ENCODE measurements at regions of chr19 and their contacts with region 1.

Region 1: GRCh38 chr19:41859618-41860418 is at the start of gene RPS19:
- DNase-seq: peak; percentile 97
- ATAC-seq: peak; percentile 89
- H3K4me3 ChIP-seq: peak within 1 kb of the TSS; percentile 94
- H3K27ac ChIP-seq: peak within 1 kb of the TSS; percentile 98
- H3K4me1 ChIP-seq: peaks cover 24% of the 10 kb centered on the region
- H3K27me3 ChIP-seq: no peaks in the 10 kb centered on the region
- CTCF ChIP-seq: peak in 2 of 3 experiments; percentile 51 to 62; a peak in 4 of 6 replicates
- EP300 ChIP-seq: no peak
- POLR2A ChIP-seq: peak; percentile 99
- RAD21 ChIP-seq: no peak
- polyA plus RNA-seq, gene RPS19: 5,523 to 5,578 TPM

Region 2: GRCh38 chr19:41734617-41735016 is 125.2 kb before region 1 on chr19:
- CTCF ChIA-PET with region 1: no interaction called
- POLR2A ChIA-PET with region 1: no interaction called
- RAD21 ChIA-PET with region 1: no interaction called
- SMC1A ChIA-PET with region 1: no interaction called
- in situ Hi-C with region 1: no loop called
- intact Hi-C with region 1: no loop called
- DNase-seq: no peak
- ATAC-seq: no peak
- H3K4me3 ChIP-seq: no peak overlapping the region
- H3K27ac ChIP-seq: no peak overlapping the region
- H3K4me1 ChIP-seq: no peaks in the 10 kb centered on the region
- H3K27me3 ChIP-seq: no peaks in the 10 kb centered on the region; a peak in 2 of 4 replicates
- CTCF ChIP-seq: no peak
- EP300 ChIP-seq: no peak
- POLR2A ChIP-seq: no peak
- RAD21 ChIP-seq: no peak

Region 3: GRCh38 chr19:41872775-41873647 is 13.2 kb after region 1 on chr19:
- CTCF ChIA-PET with region 1: interaction called, 85 read pairs
- POLR2A ChIA-PET with region 1: interaction called, 46 read pairs
- RAD21 ChIA-PET with region 1: interaction called, 57 read pairs
- SMC1A ChIA-PET with region 1: interaction called, 47 read pairs
- in situ Hi-C with region 1: no loop called
- intact Hi-C with region 1: no loop called
- DNase-seq: no peak
- ATAC-seq: peak; percentile 11; the same call in 2 of the 3 replicates
- H3K4me3 ChIP-seq: no peak overlapping the region
- H3K27ac ChIP-seq: peak overlapping the region; percentile 72
- H3K4me1 ChIP-seq: peaks cover 77% of the 10 kb centered on the region
- H3K27me3 ChIP-seq: no peaks in the 10 kb centered on the region
- CTCF ChIP-seq: peak; percentile 85 to 90 (median 88)
- EP300 ChIP-seq: no peak
- POLR2A ChIP-seq: peak; percentile 71
- RAD21 ChIP-seq: peak; percentile 87

Region 4: GRCh38 chr19:41934849-41935374 is 75.1 kb after region 1 on chr19:
- CTCF ChIA-PET with region 1: interaction called, 12 read pairs
- POLR2A ChIA-PET with region 1: interaction called, 3 read pairs
- RAD21 ChIA-PET with region 1: interaction called, 11 read pairs
- SMC1A ChIA-PET with region 1: interaction called, 3 read pairs
- in situ Hi-C with region 1: no loop called
- intact Hi-C with region 1: no loop called
- DNase-seq: no peak
- ATAC-seq: peak; percentile 93
- H3K4me3 ChIP-seq: no peak overlapping the region
- H3K27ac ChIP-seq: no peak overlapping the region
- H3K4me1 ChIP-seq: peaks cover 23% of the 10 kb centered on the region
- H3K27me3 ChIP-seq: peaks cover 0 to 6% of the 10 kb centered on the region in 2 experiments
- CTCF ChIP-seq: peak; percentile 92 to 97 (median 94); a peak in 5 of 6 replicates
- EP300 ChIP-seq: no peak
- POLR2A ChIP-seq: no peak
- RAD21 ChIP-seq: peak; percentile 94

Region 5: GRCh38 chr19:41951686-41952172 is 91.9 kb after region 1 on chr19:
- CTCF ChIA-PET with region 1: interaction called, 46 read pairs
- POLR2A ChIA-PET with region 1: no interaction called
- RAD21 ChIA-PET with region 1: interaction called, 25 read pairs
- SMC1A ChIA-PET with region 1: interaction called, 19 read pairs
- in situ Hi-C with region 1: no loop called
- intact Hi-C with region 1: no loop called
- DNase-seq: no peak
- ATAC-seq: peak; percentile 96
- H3K4me3 ChIP-seq: no peak overlapping the region
- H3K27ac ChIP-seq: no peak overlapping the region
- H3K4me1 ChIP-seq: peaks cover 8% of the 10 kb centered on the region
- H3K27me3 ChIP-seq: no peaks in the 10 kb centered on the region
- CTCF ChIP-seq: peak; percentile 96 to 99 (median 97)
- EP300 ChIP-seq: no peak
- POLR2A ChIP-seq: no peak
- RAD21 ChIP-seq: peak; percentile 97

Region 6: DNA sequence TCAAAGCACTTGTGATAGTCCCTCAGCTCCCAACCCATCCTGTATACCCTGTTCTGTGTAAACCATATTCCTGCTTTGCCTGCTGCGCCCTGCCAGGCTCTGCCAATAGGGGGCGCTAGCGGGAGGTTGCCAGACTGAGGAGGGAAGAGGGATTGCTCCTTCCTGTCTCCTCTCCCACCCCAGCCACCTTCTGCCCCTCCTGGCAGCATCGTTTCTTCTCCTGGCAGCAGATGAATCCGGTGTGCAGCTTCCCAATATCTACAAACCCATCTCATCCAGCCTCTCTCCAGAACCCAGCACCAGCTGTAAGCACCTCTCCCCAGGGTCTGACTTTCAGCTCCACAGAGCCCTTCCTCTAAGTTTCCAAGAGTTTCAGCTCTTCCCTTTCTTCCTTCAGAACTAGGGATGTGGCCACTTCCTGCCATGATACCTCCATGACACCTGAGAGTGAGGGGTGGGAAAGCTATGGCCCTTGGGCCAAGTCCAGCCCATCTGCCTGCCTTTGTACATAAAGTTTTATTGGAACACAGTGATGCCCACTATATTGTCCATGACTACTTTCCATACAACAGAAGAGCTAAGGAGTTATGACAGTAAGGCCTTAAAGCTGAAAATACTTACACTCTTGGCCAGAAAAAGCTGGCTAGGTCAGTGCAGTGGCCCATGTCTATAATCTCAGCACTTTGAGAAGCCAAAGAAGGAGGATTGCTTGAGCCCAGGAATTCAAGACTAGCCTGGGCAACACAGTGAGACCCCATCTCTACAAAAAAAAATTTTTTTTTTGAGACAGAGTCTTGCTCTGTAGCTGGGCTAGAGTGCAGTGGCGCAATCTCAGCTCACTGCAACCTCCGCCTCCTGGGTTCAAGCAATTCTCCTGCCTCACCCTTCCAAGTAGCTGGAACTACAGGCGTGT is 168.7 kb after region 1 on chr19:
- CTCF ChIA-PET with region 1: no interaction called
- POLR2A ChIA-PET with region 1: no interaction called
- RAD21 ChIA-PET with region 1: no interaction called
- SMC1A ChIA-PET with region 1: no interaction called
- in situ Hi-C with region 1: no loop called
- intact Hi-C with region 1: no loop called
- DNase-seq: no peak
- ATAC-seq: no peak
- H3K4me3 ChIP-seq: no peak overlapping the region
- H3K27ac ChIP-seq: no peak overlapping the region
- H3K4me1 ChIP-seq: no peaks in the 10 kb centered on the region
- H3K27me3 ChIP-seq: peaks cover 0 to 2% of the 10 kb centered on the region in 2 experiments; a peak in 2 of 4 replicates
- CTCF ChIP-seq: peak; percentile 41 to 74 (median 64); a peak in 5 of 6 replicates
- EP300 ChIP-seq: no peak
- POLR2A ChIP-seq: no peak
- RAD21 ChIP-seq: no peak

Measured in GM12878 (cell line).